Activated B cell treated with CpG ODN at 0.5 μM for 24 hours (primary cell): ENCODE measurements at regions of chr3 and their contacts with region 1.

Region 1: GRCh38 chr3:109023656-109024254 is 70.1 kb upstream of the GUCA1C start:
- DNase-seq: no peak
- ATAC-seq: peak; percentile 57
- H3K4me3 Mint-ChIP-seq: no peak overlapping the region
- H3K27ac Mint-ChIP-seq: no peak overlapping the region
- H3K4me1 Mint-ChIP-seq: no peaks in the 10 kb centered on the region
- H3K27me3 Mint-ChIP-seq: peaks cover 3% of the 10 kb centered on the region
- CTCF ChIP-seq: no peak

Region 2: GRCh38 chr3:108662130-108662738 is 361.5 kb before region 1 on chr3:
- CTCF ChIA-PET with region 1: interaction called, 3 read pairs
- POLR2A ChIA-PET with region 1: no interaction called
- intact Hi-C with region 1: loop called (anchors 5 kb)
- DNase-seq: no peak
- ATAC-seq: peak; percentile 66
- H3K4me3 Mint-ChIP-seq: no peak overlapping the region
- H3K27ac Mint-ChIP-seq: no peak overlapping the region
- H3K4me1 Mint-ChIP-seq: peaks cover 4% of the 10 kb centered on the region
- H3K27me3 Mint-ChIP-seq: no peaks in the 10 kb centered on the region
- CTCF ChIP-seq: no peak

Region 3: GRCh38 chr3:109081746-109082510 is 58.2 kb after region 1 on chr3:
- CTCF ChIA-PET with region 1: interaction called, 96 read pairs
- POLR2A ChIA-PET with region 1: no interaction called
- intact Hi-C with region 1: loop called (anchors 1 kb)
- DNase-seq: peak; percentile 23
- ATAC-seq: peak; percentile 97
- H3K4me3 Mint-ChIP-seq: no peak overlapping the region
- H3K27ac Mint-ChIP-seq: no peak overlapping the region
- H3K4me1 Mint-ChIP-seq: peaks cover 6% of the 10 kb centered on the region
- H3K27me3 Mint-ChIP-seq: peaks cover 9% of the 10 kb centered on the region
- CTCF ChIP-seq: no peak

Region 4: GRCh38 chr3:109224333-109224732 is 200.6 kb after region 1 on chr3:
- CTCF ChIA-PET with region 1: no interaction called
- POLR2A ChIA-PET with region 1: no interaction called
- intact Hi-C with region 1: loop called (anchors 10 kb)
- DNase-seq: no peak
- ATAC-seq: no peak
- H3K4me3 Mint-ChIP-seq: no peak overlapping the region
- H3K27ac Mint-ChIP-seq: no peak overlapping the region
- H3K4me1 Mint-ChIP-seq: no peaks in the 10 kb centered on the region
- H3K27me3 Mint-ChIP-seq: no peaks in the 10 kb centered on the region
- CTCF ChIP-seq: no peak